MCF 10A (cell line): ENCODE measurements at regions of chr1 and their contacts with region 1.

Region 1: GRCh38 chr1:119475866-119476439 is 31.1 kb upstream of the HSD3B1 start:
- DNase-seq: peak; percentile 78
- H3K4me3 Mint-ChIP-seq: no peak overlapping the region
- H3K27ac Mint-ChIP-seq: peak overlapping the region; percentile 50
- H3K4me1 Mint-ChIP-seq: peaks cover 6% of the 10 kb centered on the region
- H3K27me3 Mint-ChIP-seq: peaks cover 16% of the 10 kb centered on the region
- CTCF ChIP-seq: peak; percentile 55

Region 2: DNA sequence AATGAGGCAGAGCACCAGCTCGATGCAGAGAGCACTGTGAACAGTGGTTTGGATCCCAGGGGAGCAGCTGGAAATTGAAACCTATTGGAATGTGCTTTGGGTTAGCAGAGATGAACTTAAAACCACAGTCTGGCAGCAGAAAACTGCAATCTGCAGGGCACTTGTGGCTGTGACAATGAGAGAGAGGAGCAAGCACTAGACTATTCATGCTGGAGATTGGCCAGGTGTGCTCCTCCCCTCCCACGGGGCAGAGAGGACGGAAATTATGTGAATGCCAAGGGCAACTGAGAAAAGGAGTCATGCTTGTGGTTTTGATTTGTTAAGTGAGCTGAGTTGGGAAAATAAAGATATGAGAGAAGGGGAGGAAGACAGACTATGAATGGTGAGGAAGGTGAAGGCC is 22.9 kb before region 1 on chr1:
- CTCF ChIA-PET with region 1: interaction called, 10 read pairs
- POLR2A ChIA-PET with region 1: interaction called, 3 read pairs
- intact Hi-C with region 1: no loop called
- DNase-seq: peak; percentile 86
- H3K4me3 Mint-ChIP-seq: peak overlapping the region; percentile 9
- H3K27ac Mint-ChIP-seq: peak overlapping the region; percentile 24
- H3K4me1 Mint-ChIP-seq: peaks cover 14% of the 10 kb centered on the region
- H3K27me3 Mint-ChIP-seq: no peaks in the 10 kb centered on the region
- CTCF ChIP-seq: no peak